ENCODE measurements at regions of chr16 and their contacts with region 1.

Region 1: DNA sequence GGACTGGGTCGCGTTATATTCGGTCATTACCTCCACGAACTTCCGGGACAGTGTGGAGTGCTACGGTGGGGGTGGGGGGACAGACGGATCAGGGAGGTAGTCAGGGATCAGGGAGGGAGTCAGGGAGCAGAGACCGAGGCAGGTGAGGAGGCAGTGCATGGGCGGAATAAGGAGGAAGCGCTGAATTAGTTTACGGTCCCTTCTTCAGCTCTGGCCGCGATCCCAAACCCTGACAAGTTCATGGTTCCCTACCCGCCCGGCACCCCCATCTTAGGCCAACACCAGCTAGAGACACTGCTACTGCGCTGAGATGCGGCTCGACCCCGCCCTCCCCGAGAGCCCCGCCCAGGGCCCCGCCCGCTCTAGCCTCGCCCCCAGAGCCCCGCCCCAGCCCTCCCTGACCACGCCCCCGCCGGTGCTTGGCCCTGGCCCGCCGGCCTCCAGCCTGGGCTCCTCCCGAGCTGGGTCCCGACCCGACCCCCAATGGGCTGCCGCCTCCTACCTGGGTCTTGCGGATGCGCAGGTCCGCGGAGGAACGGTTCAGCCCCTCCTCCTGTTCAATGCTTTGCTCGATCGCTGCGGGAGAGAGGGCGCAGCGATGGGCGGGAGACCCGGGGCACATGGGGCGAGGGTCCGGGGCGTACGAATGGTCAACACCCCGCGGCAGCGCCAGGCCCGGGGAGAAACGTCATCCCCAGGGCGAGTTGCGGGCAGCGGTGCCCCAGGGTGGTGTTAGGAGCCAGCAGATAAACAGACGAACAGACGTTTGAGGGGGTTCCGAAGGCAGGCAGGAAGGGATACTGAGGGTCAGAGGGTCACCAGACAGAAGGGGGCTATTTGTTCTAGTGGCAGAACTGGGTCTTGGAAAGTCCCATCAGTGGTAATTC is 12.2 kb downstream of the HSD3B7 start:
- DNase-seq: peak; percentile 96

Region 2: GRCh38 chr16:30874821-30875717 is 122.2 kb before region 1 on chr16:
- intact Hi-C with region 1: no loop called
- DNase-seq: peak; percentile 98

Region 3: GRCh38 chr16:30977502-30977901 is 19.7 kb before region 1 on chr16:
- intact Hi-C with region 1: no loop called
- DNase-seq: no peak

Region 4: GRCh38 chr16:31032736-31033708 is 35.8 kb after region 1 on chr16 and contains the start of gene STX4:
- intact Hi-C with region 1: loop called in 1 of 2 experiments (anchors 5 kb)
- DNase-seq: peak; percentile 100
- total RNA-seq, gene STX4: 54.4 to 75.4 TPM

Measured in posterior vena cava (tissue), 2 donors.